ENCODE measurements at regions of chr1 and their contacts with region 1.

Region 1: DNA sequence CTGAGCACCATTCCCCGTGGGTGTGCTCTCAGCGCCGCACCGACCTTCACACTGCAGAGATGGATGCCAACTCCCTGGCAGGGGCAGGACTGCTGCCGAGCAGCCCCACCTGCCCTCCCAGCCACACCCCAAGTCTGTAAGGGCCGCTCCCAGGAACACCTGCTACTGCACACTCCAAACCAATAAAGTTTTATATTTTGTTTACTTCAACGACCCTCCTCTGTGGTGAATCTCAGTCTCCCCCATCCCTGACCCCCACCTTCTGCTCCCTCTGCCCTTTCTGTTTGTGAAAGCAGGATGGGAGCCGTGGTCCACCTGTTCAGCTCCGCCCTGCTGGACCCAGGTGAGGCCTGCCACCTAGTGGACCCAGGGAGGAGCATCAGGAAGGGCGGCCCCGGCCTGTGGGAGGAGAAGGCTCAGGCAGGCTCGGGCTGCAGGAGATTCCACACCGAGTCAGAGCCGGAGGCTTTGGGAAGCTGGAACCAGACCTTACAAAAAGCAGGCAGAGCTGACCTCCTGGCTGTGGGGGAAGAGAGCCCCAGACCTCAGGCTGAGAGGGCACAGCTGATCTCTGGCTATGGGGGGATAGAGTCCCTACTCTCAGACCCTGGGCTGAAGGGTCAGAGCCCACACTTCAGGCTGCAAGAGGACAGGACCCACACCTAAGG is 982 bp upstream of the TMEM82 start:
- DNase-seq: peak; percentile 82 to 90 (median 86)
- H3K4me3 ChIP-seq: no peak overlapping the region
- H3K27ac ChIP-seq: no peak overlapping the region
- H3K4me1 ChIP-seq: no peaks in the 10 kb centered on the region
- H3K27me3 ChIP-seq: no peaks in the 10 kb centered on the region
- CTCF ChIP-seq: peak; percentile 56 to 83 (median 77)
- EP300 ChIP-seq: no peak
- POLR2A ChIP-seq: peak; percentile 6

Region 2: DNA sequence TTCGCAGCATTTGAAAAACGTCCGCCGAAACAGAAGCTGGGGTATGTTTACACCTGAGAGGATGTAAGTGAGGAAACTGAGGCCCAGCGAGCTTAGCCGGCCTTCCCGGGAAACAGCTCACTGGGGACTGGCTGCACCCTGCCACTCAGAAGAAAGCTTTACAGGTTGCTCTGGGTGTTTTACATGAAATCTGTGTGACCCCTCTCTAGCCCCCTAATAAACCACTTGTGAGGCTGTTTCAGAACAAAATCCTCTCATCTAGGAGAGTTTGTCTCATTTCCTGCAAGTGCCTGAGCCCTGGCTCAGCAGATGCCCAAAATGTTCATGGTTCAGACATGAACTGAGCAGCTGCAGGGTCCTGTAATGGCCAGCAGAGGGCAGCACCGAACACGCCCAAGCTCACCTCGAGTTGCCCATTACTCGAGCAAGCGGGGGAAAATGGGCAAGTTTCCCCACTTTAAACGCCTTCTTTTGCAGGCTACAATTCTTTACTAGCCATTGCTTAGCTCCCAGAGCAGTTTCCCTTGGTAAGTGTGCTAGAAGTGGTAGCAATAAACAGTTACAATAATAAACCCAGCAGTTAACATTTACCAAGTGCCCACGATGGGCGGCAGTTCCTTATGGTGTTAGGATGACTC is 417.8 kb before region 1 on chr1:
- intact Hi-C with region 1: loop called in 2 of 4 experiments (anchors 10 kb)
- DNase-seq: peak; percentile 70 to 87 (median 83)
- H3K4me3 ChIP-seq: no peak overlapping the region
- H3K27ac ChIP-seq: no peak overlapping the region
- H3K4me1 ChIP-seq: peaks cover 2% of the 10 kb centered on the region
- H3K27me3 ChIP-seq: no peaks in the 10 kb centered on the region
- CTCF ChIP-seq: peak; percentile 90 to 95 (median 93)
- EP300 ChIP-seq: no peak
- POLR2A ChIP-seq: peak; percentile 21

Region 3: GRCh38 chr1:15598436-15598835 is 142.9 kb before region 1 on chr1:
- intact Hi-C with region 1: loop called in 3 of 4 experiments (anchors 10 kb)
- DNase-seq: no peak
- H3K4me3 ChIP-seq: no peak overlapping the region
- H3K27ac ChIP-seq: no peak overlapping the region
- H3K4me1 ChIP-seq: peaks cover 2% of the 10 kb centered on the region
- H3K27me3 ChIP-seq: no peaks in the 10 kb centered on the region
- CTCF ChIP-seq: no peak
- EP300 ChIP-seq: no peak
- POLR2A ChIP-seq: no peak

Measured in ovary (tissue), 10 donors.